Transverse colon (tissue), 4 donors: ENCODE measurements at regions of chr7 and their contacts with region 1.

Region 1: DNA sequence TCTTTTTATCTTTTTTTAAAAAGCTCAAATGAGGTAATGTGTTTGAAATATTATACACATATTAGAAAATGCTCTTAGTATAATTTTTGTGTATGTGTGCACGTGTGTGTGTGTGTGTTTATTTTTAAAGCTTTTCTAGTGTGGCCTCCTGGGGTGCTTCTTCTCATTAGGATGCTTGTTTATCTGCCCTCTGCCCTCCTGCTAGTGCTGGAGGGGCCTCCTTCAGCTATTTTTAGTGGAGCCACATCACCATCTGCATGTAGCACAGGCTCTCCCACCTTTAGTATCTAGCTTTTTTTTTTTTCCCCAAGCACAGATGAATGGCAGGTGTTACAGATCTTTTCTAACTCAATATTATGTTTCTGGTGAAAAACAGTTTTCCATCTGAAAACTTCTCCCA is 155.7 kb upstream of the TMEM229A start:
- DNase-seq: no peak
- H3K4me3 ChIP-seq: no peak overlapping the region
- H3K27ac ChIP-seq: no peak overlapping the region
- H3K4me1 ChIP-seq: no peaks in the 10 kb centered on the region
- H3K27me3 ChIP-seq: no peaks in the 10 kb centered on the region
- CTCF ChIP-seq: no peak
- EP300 ChIP-seq: no peak
- POLR2A ChIP-seq: no peak

Region 2: DNA sequence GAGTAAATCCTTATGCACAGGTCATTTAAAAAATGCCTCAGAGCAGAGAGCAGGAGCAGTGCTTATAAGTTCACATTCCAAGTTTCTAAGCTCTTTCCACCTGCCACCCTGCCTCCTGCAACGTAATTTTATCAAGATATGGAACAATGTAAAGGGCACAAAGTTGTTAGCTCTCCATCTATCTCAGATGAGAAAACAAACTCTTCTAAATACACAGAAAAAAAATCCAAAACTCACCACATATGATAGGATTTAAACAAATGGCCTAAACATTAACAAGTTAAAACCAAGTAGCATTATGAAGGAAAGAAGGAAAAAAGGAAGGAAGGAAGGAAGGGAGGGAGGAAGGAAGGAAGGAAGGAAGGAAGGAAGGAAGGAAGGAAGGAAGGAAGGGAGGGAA is 1931.4 kb after region 1 on chr7:
- in situ Hi-C with region 1: no loop called
- intact Hi-C with region 1: loop called (anchors 10 kb)
- DNase-seq: no peak
- H3K4me3 ChIP-seq: no peak overlapping the region
- H3K27ac ChIP-seq: no peak overlapping the region
- H3K4me1 ChIP-seq: no peaks in the 10 kb centered on the region
- H3K27me3 ChIP-seq: no peaks in the 10 kb centered on the region
- CTCF ChIP-seq: no peak
- EP300 ChIP-seq: no peak
- POLR2A ChIP-seq: no peak